Activated CD4-positive, alpha-beta memory T cell treated with anti-CD3 and anti-CD28 coated beads for 36 hours (primary cell): ENCODE measurements at regions of chr4 and their contacts with region 1.

Region 1: DNA sequence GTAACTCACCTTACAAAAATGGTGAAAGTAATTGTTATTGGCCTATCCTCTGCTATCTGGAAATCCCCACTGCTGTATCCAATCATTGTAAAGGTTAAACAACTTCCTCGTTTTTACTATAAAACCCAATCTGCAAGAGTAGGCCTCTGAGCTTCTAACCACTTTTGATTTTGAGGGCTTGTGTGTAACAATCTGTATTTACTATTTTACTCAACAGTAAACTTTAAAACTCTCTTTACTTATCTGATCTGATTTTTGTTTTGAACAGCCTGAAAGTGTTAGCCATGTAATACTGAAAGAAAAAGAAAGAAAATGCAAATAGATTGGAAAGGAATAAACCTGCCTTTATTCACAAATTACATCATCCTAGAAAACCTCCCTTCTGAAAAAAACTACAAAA is 63.1 kb downstream of the SLC10A7 start:
- DNase-seq: no peak
- H3K4me3 Mint-ChIP-seq: peak overlapping the region; percentile 46
- H3K27ac Mint-ChIP-seq: peak overlapping the region; percentile 89
- H3K4me1 Mint-ChIP-seq: peaks cover 17% of the 10 kb centered on the region
- H3K27me3 Mint-ChIP-seq: no peaks in the 10 kb centered on the region

Region 2: GRCh38 chr4:146342600-146343192 is 115.9 kb before region 1 on chr4:
- CTCF ChIA-PET with region 1: no interaction called
- POLR2A ChIA-PET with region 1: no interaction called
- intact Hi-C with region 1: loop called (anchors 10 kb)
- DNase-seq: peak; percentile 27
- H3K4me3 Mint-ChIP-seq: no peak overlapping the region
- H3K27ac Mint-ChIP-seq: no peak overlapping the region
- H3K4me1 Mint-ChIP-seq: peaks cover 3% of the 10 kb centered on the region
- H3K27me3 Mint-ChIP-seq: no peaks in the 10 kb centered on the region

Region 3: GRCh38 chr4:146437778-146438177 is 20.8 kb before region 1 on chr4:
- CTCF ChIA-PET with region 1: no interaction called
- POLR2A ChIA-PET with region 1: no interaction called
- intact Hi-C with region 1: loop called (anchors 1 kb)
- DNase-seq: no peak
- H3K4me3 Mint-ChIP-seq: no peak overlapping the region
- H3K27ac Mint-ChIP-seq: no peak overlapping the region
- H3K4me1 Mint-ChIP-seq: peaks cover 6% of the 10 kb centered on the region
- H3K27me3 Mint-ChIP-seq: no peaks in the 10 kb centered on the region

Region 4: GRCh38 chr4:146486565-146486964 is 28.0 kb after region 1 on chr4:
- CTCF ChIA-PET with region 1: interaction called, 4 read pairs
- POLR2A ChIA-PET with region 1: no interaction called
- intact Hi-C with region 1: loop called (anchors 1 kb)
- DNase-seq: no peak
- H3K4me3 Mint-ChIP-seq: no peak overlapping the region
- H3K27ac Mint-ChIP-seq: peak overlapping the region; percentile 33
- H3K4me1 Mint-ChIP-seq: peaks cover 27% of the 10 kb centered on the region
- H3K27me3 Mint-ChIP-seq: no peaks in the 10 kb centered on the region

Region 5: GRCh38 chr4:146495277-146495676 is 36.7 kb after region 1 on chr4:
- CTCF ChIA-PET with region 1: no interaction called
- POLR2A ChIA-PET with region 1: no interaction called
- intact Hi-C with region 1: loop called (anchors 1 kb)
- DNase-seq: no peak
- H3K4me3 Mint-ChIP-seq: no peak overlapping the region
- H3K27ac Mint-ChIP-seq: no peak overlapping the region
- H3K4me1 Mint-ChIP-seq: peaks cover 22% of the 10 kb centered on the region
- H3K27me3 Mint-ChIP-seq: no peaks in the 10 kb centered on the region